B cell (primary cell): ENCODE measurements at regions of chr17 and their contacts with region 1.

Region 1: GRCh38 chr17:8997994-8998628 is 23.2 kb upstream of the NTN1 start:
- DNase-seq: peak; percentile 85
- ATAC-seq: peak; percentile 79
- H3K4me3 ChIP-seq: no peak overlapping the region
- H3K4me3 Mint-ChIP-seq: no peak overlapping the region
- H3K27ac ChIP-seq: no peak overlapping the region
- H3K27ac Mint-ChIP-seq: no peak overlapping the region
- H3K4me1 ChIP-seq: peaks cover 17 to 18% of the 10 kb centered on the region in 2 donors
- H3K4me1 Mint-ChIP-seq: peaks cover 22% of the 10 kb centered on the region
- H3K27me3 ChIP-seq: peaks cover 0 to 17% (median 9%) of the 10 kb centered on the region in 4 experiments
- H3K27me3 Mint-ChIP-seq: peaks cover 15% of the 10 kb centered on the region
- CTCF ChIP-seq: peak; percentile 99

Region 2: GRCh38 chr17:8383143-8383822 is 614.8 kb before region 1 on chr17 and contains the start of gene RPL26:
- CTCF ChIA-PET with region 1: interaction called, 6 read pairs
- POLR2A ChIA-PET with region 1: no interaction called
- intact Hi-C with region 1: loop called (anchors 1 kb)
- DNase-seq: peak; percentile 98
- ATAC-seq: peak; percentile 89
- H3K4me3 ChIP-seq: peak within 1 kb of the TSS; percentile 73 to 95 (median 84)
- H3K4me3 Mint-ChIP-seq: peak within 1 kb of the TSS; percentile 89
- H3K27ac ChIP-seq: peak within 1 kb of the TSS; percentile 72 to 82
- H3K27ac Mint-ChIP-seq: peak within 1 kb of the TSS; percentile 87
- H3K4me1 ChIP-seq: peaks cover 25 to 36% of the 10 kb centered on the region in 2 donors
- H3K4me1 Mint-ChIP-seq: peaks cover 50% of the 10 kb centered on the region
- H3K27me3 ChIP-seq: no peaks in the 10 kb centered on the region
- H3K27me3 Mint-ChIP-seq: no peaks in the 10 kb centered on the region
- CTCF ChIP-seq: peak; percentile 100
- total RNA-seq, gene RPL26: 2,601 and 2,684 TPM in 2 replicates

Region 3: DNA sequence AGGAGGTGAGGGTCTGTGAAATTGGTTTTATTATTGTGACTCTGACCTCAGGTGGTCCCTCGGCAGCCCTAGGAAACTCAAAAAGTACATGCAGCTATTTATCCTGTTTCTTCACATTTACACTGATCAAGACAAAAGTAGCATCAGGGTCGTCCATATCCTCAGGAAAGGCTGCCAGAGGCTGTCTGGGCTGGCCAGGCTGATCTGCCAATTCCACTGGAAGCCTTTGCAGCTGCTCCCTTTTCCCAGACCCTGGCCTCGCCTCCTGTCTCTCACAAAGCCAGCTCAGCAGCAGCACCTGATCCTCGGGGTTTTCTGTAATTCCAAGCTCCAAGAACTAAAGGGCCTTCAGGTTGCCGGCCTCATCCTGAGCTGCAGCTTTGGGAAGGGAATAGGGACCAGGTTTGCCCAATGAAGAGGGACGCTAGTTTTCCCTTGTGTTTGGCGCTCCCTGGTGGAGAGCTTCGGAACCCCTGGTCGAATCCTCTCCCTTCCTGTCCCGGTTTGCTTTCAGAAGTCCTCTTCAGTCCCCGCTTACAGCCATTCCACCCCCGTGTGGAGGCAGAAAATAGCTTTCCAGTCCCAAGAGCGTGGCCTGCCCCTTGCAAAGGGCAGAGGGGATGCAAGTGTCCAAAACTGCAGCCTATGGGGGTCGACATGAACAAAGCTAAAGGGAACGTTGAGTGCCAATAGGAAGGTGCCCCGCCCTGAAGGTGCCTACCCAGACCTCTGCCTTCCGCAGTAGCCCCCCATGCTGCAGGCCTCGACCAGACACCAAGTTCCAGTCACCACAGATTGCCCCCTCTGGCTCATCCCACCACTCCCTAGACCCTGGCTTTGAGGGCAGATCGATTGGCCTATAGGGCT is 212.3 kb before region 1 on chr17:
- CTCF ChIA-PET with region 1: interaction called, 31 read pairs
- POLR2A ChIA-PET with region 1: no interaction called
- intact Hi-C with region 1: no loop called
- DNase-seq: peak; percentile 68
- ATAC-seq: no peak
- H3K4me3 ChIP-seq: no peak overlapping the region
- H3K4me3 Mint-ChIP-seq: no peak overlapping the region
- H3K27ac ChIP-seq: no peak overlapping the region
- H3K27ac Mint-ChIP-seq: no peak overlapping the region
- H3K4me1 ChIP-seq: peaks cover 3 to 6% of the 10 kb centered on the region in 2 donors
- H3K4me1 Mint-ChIP-seq: peaks cover 2% of the 10 kb centered on the region
- H3K27me3 ChIP-seq: peaks cover 0 to 6% (median 0%) of the 10 kb centered on the region in 4 experiments
- H3K27me3 Mint-ChIP-seq: peaks cover 6% of the 10 kb centered on the region
- CTCF ChIP-seq: peak; percentile 94

Region 4: GRCh38 chr17:8857919-8858318 is 140.2 kb before region 1 on chr17:
- CTCF ChIA-PET with region 1: interaction called, 3 read pairs
- POLR2A ChIA-PET with region 1: no interaction called
- intact Hi-C with region 1: loop called (anchors 5 kb)
- DNase-seq: peak; percentile 61
- ATAC-seq: peak; percentile 77
- H3K4me3 ChIP-seq: peak overlapping the region in 1 of 5 experiments; percentile 21
- H3K4me3 Mint-ChIP-seq: peak overlapping the region; percentile 82
- H3K27ac ChIP-seq: peak overlapping the region in 1 of 2 donors; percentile 48
- H3K27ac Mint-ChIP-seq: peak overlapping the region; percentile 83
- H3K4me1 ChIP-seq: peaks cover 29 to 38% of the 10 kb centered on the region in 2 donors
- H3K4me1 Mint-ChIP-seq: peaks cover 48% of the 10 kb centered on the region
- H3K27me3 ChIP-seq: no peaks in the 10 kb centered on the region
- H3K27me3 Mint-ChIP-seq: no peaks in the 10 kb centered on the region
- CTCF ChIP-seq: no peak

Region 5: GRCh38 chr17:8954339-8954738 is 43.8 kb before region 1 on chr17:
- CTCF ChIA-PET with region 1: interaction called, 19 read pairs
- POLR2A ChIA-PET with region 1: no interaction called
- intact Hi-C with region 1: no loop called
- DNase-seq: peak; percentile 88
- ATAC-seq: peak; percentile 99
- H3K4me3 ChIP-seq: peak overlapping the region in 3 of 5 experiments; percentile 8 to 31 (median 22)
- H3K4me3 Mint-ChIP-seq: peak overlapping the region; percentile 87
- H3K27ac ChIP-seq: peak overlapping the region; percentile 76 to 84
- H3K27ac Mint-ChIP-seq: peak overlapping the region; percentile 97
- H3K4me1 ChIP-seq: peaks cover 53 to 74% of the 10 kb centered on the region in 2 donors
- H3K4me1 Mint-ChIP-seq: peaks cover 85% of the 10 kb centered on the region
- H3K27me3 ChIP-seq: no peaks in the 10 kb centered on the region
- H3K27me3 Mint-ChIP-seq: no peaks in the 10 kb centered on the region
- CTCF ChIP-seq: no peak

Region 6: DNA sequence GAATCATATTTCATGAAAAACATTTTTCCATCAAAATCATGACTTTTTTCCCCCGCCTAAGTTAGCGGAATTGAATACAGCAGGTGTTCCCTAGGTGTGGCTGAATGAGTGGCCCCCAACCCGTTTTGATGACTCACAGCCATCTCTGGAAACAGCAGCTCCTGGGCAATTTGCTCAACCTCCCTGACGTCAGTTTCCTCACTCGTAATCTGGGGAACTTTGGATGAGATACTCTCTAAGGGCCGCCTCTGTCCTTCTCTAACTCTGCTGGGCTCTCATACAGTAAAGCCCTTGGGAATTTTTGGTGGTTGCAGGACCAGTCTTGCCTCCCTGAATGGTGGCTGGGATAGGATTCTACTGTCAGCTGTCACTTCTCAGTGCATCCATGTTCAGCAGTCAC is 11.6 kb after region 1 on chr17:
- CTCF ChIA-PET with region 1: interaction called, 32 read pairs
- POLR2A ChIA-PET with region 1: no interaction called
- intact Hi-C with region 1: no loop called
- DNase-seq: no peak
- ATAC-seq: no peak
- H3K4me3 ChIP-seq: no peak overlapping the region
- H3K4me3 Mint-ChIP-seq: no peak overlapping the region
- H3K27ac ChIP-seq: no peak overlapping the region
- H3K27ac Mint-ChIP-seq: no peak overlapping the region
- H3K4me1 ChIP-seq: peaks cover under 1 to 3% of the 10 kb centered on the region in 2 donors
- H3K4me1 Mint-ChIP-seq: peaks cover 4% of the 10 kb centered on the region
- H3K27me3 ChIP-seq: peaks cover 0 to 45% (median 26%) of the 10 kb centered on the region in 4 experiments
- H3K27me3 Mint-ChIP-seq: peaks cover 79% of the 10 kb centered on the region
- CTCF ChIP-seq: no peak

Region 7: DNA sequence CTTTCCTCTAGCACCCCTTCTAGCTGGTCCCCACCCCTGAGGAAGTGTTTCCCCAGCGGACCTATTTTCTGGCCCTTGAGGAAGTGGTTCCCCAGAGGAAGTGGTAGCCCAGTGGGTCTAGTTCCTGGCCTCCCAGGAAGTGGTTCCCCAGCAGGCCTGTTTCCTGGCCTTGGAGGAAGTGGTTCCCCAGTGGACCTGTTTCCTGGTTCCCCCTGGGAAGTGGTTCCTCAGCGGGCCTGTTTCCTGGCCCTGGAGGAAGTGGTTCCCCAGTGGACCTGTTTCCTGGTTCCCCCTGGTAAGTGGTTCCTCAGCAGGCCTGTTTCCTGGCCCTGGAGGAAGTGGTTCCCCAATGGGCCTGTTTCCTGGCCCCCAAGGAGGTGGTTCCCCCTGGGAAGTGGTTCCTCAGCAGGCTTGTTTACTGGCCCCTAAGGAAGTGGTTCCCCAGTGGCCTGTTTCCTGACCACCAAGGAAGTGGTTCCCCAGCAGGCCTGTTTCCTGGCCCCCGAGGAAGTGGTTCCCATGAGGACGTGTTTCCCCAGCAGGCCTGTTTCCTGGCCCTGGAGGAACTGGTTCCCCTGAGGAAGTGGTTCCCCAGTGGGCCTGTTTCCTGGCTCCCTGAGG is 81.5 kb after region 1 on chr17:
- CTCF ChIA-PET with region 1: no interaction called
- POLR2A ChIA-PET with region 1: no interaction called
- intact Hi-C with region 1: no loop called
- DNase-seq: no peak
- ATAC-seq: no peak
- H3K4me3 ChIP-seq: no peak overlapping the region
- H3K4me3 Mint-ChIP-seq: no peak overlapping the region
- H3K27ac ChIP-seq: peak overlapping the region; percentile 21 to 77
- H3K27ac Mint-ChIP-seq: no peak overlapping the region
- H3K4me1 ChIP-seq: no peaks in the 10 kb centered on the region
- H3K4me1 Mint-ChIP-seq: peaks cover 2% of the 10 kb centered on the region
- H3K27me3 ChIP-seq: peaks cover 0 to 4% (median 0%) of the 10 kb centered on the region in 4 experiments
- H3K27me3 Mint-ChIP-seq: no peaks in the 10 kb centered on the region
- CTCF ChIP-seq: no peak